Ovary (tissue), 10 donors: ENCODE measurements at regions of chr16 and their contacts with region 1.

Region 1: DNA sequence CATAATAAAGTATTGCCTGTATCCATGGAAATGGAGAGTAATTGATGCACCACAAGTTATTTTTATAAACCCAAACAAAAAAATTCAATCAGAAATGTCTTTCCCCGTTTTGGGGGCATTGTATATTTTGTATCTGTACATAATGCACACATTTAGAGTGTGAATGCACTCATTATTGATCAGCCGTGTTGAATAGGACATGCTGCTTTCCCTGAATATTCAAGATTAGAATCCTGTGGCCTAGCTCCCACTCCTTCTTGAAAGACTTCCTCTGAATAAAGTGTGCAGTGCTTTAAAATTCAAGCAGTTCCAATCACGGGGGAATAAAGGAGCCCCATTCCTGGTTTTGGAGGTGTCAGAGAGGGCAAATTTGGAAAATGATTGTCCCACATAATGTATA is 103.8 kb upstream of the TOX3 start:
- DNase-seq: no peak
- H3K4me3 ChIP-seq: no peak overlapping the region
- H3K27ac ChIP-seq: no peak overlapping the region
- H3K4me1 ChIP-seq: no peaks in the 10 kb centered on the region
- H3K27me3 ChIP-seq: no peaks in the 10 kb centered on the region
- CTCF ChIP-seq: no peak
- EP300 ChIP-seq: no peak
- POLR2A ChIP-seq: no peak

Region 2: GRCh38 chr16:51317575-51317974 is 1333.2 kb before region 1 on chr16:
- intact Hi-C with region 1: loop called in 1 of 4 experiments (anchors 5 kb)
- DNase-seq: no peak
- H3K4me3 ChIP-seq: no peak overlapping the region
- H3K27ac ChIP-seq: no peak overlapping the region
- H3K4me1 ChIP-seq: peaks cover 1% of the 10 kb centered on the region
- H3K27me3 ChIP-seq: no peaks in the 10 kb centered on the region
- CTCF ChIP-seq: no peak
- EP300 ChIP-seq: no peak
- POLR2A ChIP-seq: no peak